ENCODE measurements at regions of chr2 and their contacts with region 1.

Region 1: GRCh38 chr2:177263451-177264208 is 897 bp downstream of the NFE2L2 start:
- DNase-seq: peak; percentile 99

Region 2: DNA sequence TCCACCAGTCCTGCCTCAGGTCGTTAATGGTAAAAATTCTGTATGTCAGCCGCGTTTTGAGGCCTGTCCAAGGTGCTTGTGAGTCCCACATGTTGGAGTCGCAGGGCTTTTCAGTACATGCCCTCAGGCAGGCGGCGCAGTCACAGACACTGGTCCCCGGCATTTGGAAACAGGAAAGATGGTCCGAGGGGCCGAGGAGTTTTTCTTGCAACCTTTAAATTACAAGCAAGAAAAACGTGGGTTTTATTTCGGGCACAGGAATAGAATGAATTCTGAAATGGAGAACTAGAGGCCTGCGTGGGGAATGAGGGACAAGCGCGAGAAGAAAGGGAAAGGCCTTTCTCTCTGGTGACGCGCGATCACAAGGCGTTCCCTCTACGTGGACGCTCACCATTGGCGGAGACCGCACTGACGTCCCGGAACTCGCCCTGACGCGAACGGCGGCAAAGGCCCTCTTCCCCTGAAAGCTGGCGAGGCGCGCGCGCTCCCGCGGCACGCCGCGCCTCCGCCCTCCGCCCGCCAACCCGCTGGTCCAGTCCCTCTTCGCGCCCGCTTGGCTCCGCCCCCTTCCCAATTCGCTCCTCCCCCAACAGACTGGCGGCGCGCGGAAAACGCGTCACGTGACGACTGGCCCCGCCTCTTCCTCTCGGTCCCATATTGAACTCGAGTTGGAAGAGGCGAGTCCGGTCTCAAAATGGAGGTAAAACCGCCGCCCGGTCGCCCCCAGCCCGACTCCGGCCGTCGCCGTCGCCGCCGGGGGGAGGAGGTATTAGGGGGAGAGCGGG is 51.3 kb before region 1 on chr2 and contains the start of gene HNRNPA3:
- intact Hi-C with region 1: loop called (anchors 5 to 10 kb)
- DNase-seq: peak; percentile 100
- total RNA-seq, gene HNRNPA3: 152 to 166 TPM

Region 3: DNA sequence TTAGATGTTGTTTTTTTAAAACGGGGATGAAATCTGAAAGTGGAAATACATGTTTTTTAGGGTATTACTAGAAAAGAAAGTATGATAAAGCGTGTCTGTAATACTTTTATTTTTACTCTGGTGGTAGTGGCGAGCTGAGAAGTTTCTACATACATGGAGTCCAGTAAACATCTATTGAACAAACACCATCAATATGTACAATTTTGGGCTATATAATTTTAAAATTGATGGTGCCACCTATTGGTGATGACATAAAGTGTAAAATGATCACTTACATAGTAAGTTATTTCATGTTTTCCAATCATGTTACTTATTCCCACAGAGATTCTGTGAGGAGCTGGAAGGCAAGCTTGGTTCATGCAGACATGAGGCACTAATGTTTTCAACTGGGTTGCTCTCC is 32.4 kb after region 1 on chr2:
- intact Hi-C with region 1: loop called in 1 of 2 experiments (anchors 1 kb)
- DNase-seq: no peak

Region 4: GRCh38 chr2:177332041-177332991 is 68.7 kb after region 1 on chr2:
- intact Hi-C with region 1: loop called in 1 of 2 experiments (anchors 10 kb)
- DNase-seq: no peak

Measured in posterior vena cava (tissue), 2 donors.